Lower leg skin (tissue), 4 donors: ENCODE measurements at regions of chr7 and their contacts with region 1.

Region 1: DNA sequence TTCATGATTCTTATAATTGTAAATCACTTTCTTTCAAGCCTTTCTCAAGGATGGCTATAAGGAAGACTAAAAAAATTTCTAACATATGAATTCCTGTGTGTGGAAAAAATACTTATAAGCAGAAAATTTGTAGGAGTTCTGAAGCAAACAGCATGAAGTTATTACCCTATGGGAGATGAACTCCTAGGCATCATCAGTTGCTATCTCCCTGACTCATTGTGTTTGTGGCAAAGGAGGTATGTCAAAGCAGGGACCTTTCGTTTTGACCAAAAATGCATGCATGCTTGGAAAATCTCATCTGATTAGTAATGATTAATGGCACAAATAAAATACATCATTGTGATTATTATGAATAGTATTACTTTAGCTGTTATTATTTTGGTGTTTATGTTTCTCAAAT is 59.4 kb downstream of the CALCR start:
- DNase-seq: no peak
- H3K4me3 ChIP-seq: no peak overlapping the region
- CTCF ChIP-seq: no peak
- POLR2A ChIP-seq: no peak

Region 2: DNA sequence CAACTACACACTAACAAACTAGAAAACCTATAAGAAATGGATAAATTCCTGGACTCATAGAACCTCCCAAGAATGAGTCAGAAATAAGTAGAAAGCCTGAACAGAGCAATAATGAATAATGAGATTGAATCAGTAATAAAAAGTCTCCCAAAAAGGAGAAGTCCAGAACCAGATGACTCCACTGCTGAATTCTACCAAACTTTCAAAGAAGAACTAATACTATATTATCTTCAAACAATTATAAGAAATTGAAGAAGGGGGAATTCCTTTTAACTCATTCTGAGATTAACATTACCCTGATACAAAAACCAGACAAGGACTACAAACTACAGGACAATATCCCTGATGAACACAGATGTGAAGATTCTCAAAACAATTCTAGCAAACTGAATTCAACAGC is 630.9 kb before region 1 on chr7:
- intact Hi-C with region 1: no loop called
- DNase-seq: no peak
- H3K4me3 ChIP-seq: no peak overlapping the region
- CTCF ChIP-seq: no peak
- POLR2A ChIP-seq: no peak

Region 3: DNA sequence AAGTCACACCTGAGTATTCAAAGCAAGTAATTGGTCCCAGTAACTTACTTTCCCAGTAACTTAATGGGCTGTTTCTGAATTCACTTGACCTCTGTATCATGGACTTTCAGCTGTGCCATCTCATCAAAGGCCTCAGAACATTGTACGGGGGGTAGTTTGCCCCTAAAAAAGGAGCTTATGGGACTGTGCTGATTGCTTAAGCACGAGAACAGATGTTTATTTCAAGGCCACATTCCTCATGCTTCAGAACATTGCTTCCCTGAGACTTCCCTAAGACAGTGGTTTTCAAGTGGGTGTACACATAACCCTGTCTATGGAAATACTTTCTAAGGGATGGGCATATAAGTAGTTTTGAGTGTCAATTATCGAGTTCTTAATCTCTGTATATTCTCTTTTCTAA is 32.6 kb after region 1 on chr7:
- intact Hi-C with region 1: loop called (anchors 1 kb)
- DNase-seq: no peak
- H3K4me3 ChIP-seq: no peak overlapping the region
- CTCF ChIP-seq: no peak
- POLR2A ChIP-seq: no peak

Region 4: DNA sequence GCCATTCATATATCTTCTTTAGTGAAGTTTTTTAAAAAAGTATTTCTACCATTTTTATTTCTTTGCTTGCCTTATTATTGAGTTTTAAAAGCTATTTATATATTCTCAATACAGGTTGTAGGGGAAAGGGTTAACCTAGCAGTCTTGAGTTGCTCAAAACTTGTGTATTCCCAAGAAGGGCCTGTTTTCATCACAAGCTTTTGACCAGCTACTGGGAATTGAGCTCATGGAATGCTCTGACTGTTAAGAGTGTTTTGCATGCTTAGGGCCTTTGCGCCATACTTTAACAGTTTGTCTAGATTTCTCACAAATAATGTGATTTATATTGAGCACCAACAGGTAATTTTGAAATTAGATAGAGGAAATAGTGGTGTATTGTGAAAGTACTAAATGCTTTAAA is 131.4 kb after region 1 on chr7:
- intact Hi-C with region 1: no loop called
- DNase-seq: no peak
- H3K4me3 ChIP-seq: no peak overlapping the region
- CTCF ChIP-seq: no peak
- POLR2A ChIP-seq: no peak

Region 5: GRCh38 chr7:94355454-94355853 is 840.3 kb after region 1 on chr7:
- intact Hi-C with region 1: no loop called
- DNase-seq: no peak
- H3K4me3 ChIP-seq: no peak overlapping the region
- CTCF ChIP-seq: no peak
- POLR2A ChIP-seq: no peak